Endothelial cell of umbilical vein (primary cell): ENCODE measurements at regions of chr2 and their contacts with region 1.

Region 1: GRCh38 chr2:60881047-60881932 is at the start of gene REL:
- DNase-seq: peak; percentile 90
- H3K4me3 ChIP-seq: peak within 1 kb of the TSS; percentile 94 to 99 (median 98)
- H3K27ac ChIP-seq: peak within 1 kb of the TSS; percentile 94
- H3K4me1 ChIP-seq: peaks cover 33% of the 10 kb centered on the region
- H3K27me3 ChIP-seq: no peaks in the 10 kb centered on the region
- CTCF ChIP-seq: peak in 1 of 2 donors; percentile 5
- POLR2A ChIP-seq: no peak
- total RNA-seq, gene REL: 11.7 and 12.8 TPM in 2 replicates

Region 2: GRCh38 chr2:60794277-60794863 is 86.9 kb before region 1 on chr2:
- CTCF ChIA-PET with region 1: interaction called, 6 read pairs
- POLR2A ChIA-PET with region 1: no interaction called
- dilution Hi-C with region 1: no loop called
- intact Hi-C with region 1: loop called (anchors 1 kb)
- DNase-seq: peak; percentile 46
- H3K4me3 ChIP-seq: no peak overlapping the region
- H3K27ac ChIP-seq: no peak overlapping the region
- H3K4me1 ChIP-seq: peaks cover 21% of the 10 kb centered on the region
- H3K27me3 ChIP-seq: no peaks in the 10 kb centered on the region
- CTCF ChIP-seq: peak; percentile 23 to 25
- POLR2A ChIP-seq: no peak

Region 3: GRCh38 chr2:60840880-60841279 is 40.4 kb before region 1 on chr2:
- CTCF ChIA-PET with region 1: no interaction called
- POLR2A ChIA-PET with region 1: no interaction called
- dilution Hi-C with region 1: no loop called
- intact Hi-C with region 1: no loop called
- DNase-seq: no peak
- H3K4me3 ChIP-seq: no peak overlapping the region
- H3K27ac ChIP-seq: no peak overlapping the region
- H3K4me1 ChIP-seq: no peaks in the 10 kb centered on the region
- H3K27me3 ChIP-seq: peaks cover 8 to 9% of the 10 kb centered on the region in 2 experiments
- CTCF ChIP-seq: no peak
- POLR2A ChIP-seq: no peak

Region 4: GRCh38 chr2:61016808-61017555 is 135.7 kb after region 1 on chr2:
- CTCF ChIA-PET with region 1: no interaction called
- POLR2A ChIA-PET with region 1: no interaction called
- dilution Hi-C with region 1: no loop called
- intact Hi-C with region 1: loop called (anchors 5 kb)
- DNase-seq: no peak
- H3K4me3 ChIP-seq: peak overlapping the region; percentile 73 to 98 (median 94)
- H3K27ac ChIP-seq: peak overlapping the region; percentile 67
- H3K4me1 ChIP-seq: peaks cover 22% of the 10 kb centered on the region
- H3K27me3 ChIP-seq: no peaks in the 10 kb centered on the region
- CTCF ChIP-seq: no peak
- POLR2A ChIP-seq: no peak